Endothelial cell of umbilical vein (primary cell): ENCODE measurements at regions of chr18 and their contacts with region 1.

Region 1: DNA sequence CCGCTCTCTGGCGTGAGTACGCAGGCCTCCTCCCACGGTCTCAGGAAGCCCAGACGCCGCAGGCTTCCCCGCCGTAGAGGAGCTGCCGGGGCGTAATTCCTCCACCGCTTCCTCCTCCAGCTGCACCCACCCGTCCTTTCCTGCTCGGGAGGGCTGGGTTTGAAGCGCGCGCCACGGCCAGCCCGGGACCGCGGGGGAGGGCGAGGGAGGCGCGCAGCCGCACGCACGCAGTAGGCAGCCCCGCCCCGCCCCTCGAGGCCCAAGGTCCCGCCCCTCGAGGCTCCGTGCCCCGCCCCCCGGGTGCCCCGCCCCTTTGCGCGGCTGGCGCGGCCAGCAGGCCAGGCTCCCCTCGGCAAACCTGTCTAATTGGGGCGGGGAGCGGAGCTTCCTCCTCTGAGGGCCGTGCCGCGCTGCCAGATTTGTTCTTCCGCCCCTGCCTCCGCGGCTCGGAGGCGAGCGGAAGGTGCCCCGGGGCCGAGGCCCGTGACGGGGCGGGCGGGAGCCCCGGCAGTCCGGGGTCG is at the start of gene MALT1:
- DNase-seq: peak; percentile 85
- H3K4me3 ChIP-seq: peak within 1 kb of the TSS; percentile 60 to 72 (median 64)
- H3K27ac ChIP-seq: peak within 1 kb of the TSS; percentile 36
- H3K4me1 ChIP-seq: peaks cover 25% of the 10 kb centered on the region
- H3K27me3 ChIP-seq: peaks cover 5% of the 10 kb centered on the region in 2 experiments
- CTCF ChIP-seq: no peak
- POLR2A ChIP-seq: peak; percentile 50
- total RNA-seq, gene MALT1: 5.1 and 8.8 TPM in 2 replicates

Region 2: DNA sequence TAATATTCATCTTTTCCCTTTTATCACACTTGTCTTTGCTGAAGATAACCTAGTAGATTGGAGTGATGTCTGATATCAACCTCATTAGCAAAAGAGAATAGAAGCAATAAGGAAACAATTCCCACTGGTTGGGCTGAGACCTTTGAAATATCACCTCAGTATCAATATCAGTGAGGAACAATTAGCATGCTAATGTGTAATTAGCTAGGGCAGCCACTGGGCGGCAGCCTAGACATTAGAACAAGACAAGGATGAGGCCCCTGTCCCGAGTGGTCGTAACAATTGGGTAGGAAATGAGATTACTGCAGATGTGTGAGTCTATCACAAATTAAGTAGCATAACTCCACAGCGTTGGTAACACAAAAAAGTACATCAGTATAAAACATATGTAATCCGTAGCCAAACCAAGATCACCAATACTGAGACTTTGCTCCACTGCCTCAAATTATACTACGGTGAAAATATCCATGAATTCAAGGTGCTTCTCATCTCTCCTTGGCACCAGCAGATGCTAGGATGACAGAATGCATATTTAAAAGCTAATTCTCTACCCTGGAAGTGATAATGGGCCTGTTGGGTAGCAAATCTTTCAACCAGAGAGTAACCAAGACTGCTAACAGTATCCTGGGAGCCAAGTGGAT is 141.3 kb before region 1 on chr18:
- CTCF ChIA-PET with region 1: interaction called, 16 read pairs
- POLR2A ChIA-PET with region 1: no interaction called
- dilution Hi-C with region 1: no loop called
- intact Hi-C with region 1: loop called (anchors 5 kb)
- DNase-seq: peak; percentile 49
- H3K4me3 ChIP-seq: no peak overlapping the region
- H3K27ac ChIP-seq: no peak overlapping the region
- H3K4me1 ChIP-seq: no peaks in the 10 kb centered on the region
- H3K27me3 ChIP-seq: peaks cover 6 to 21% of the 10 kb centered on the region in 2 experiments
- CTCF ChIP-seq: peak; percentile 65 to 74
- POLR2A ChIP-seq: no peak

Region 3: DNA sequence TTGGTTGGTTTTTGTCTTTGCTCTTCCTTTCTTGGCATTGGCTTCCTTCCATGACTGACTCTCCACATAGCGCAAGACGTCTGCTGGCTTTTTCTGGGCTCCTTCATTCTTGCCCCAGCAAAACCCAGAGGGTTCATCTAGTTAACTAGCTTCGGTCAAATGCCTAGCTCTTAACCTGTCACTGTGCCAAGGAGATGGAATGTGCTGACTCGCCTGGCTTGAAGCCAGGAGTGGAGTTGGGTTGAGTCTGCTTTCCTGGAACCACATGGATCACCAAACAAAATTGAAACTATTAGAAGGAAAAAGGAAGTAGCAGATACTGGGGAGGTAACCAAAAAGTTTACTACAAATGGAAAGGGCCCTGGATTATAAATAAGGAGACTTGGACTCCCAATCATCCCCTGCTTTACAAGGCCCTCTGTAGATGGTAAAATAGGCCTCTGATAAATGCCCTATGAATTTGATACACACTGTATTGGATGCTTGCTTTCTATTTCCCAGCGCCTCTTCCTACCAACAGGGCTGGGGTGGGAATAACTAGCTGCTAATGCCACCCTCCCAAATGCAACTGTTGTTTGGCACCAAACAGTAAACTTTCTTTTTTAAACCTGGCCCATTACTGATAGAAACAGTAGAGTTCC is 11.4 kb after region 1 on chr18:
- CTCF ChIA-PET with region 1: interaction called, 16 read pairs
- POLR2A ChIA-PET with region 1: no interaction called
- dilution Hi-C with region 1: no loop called
- intact Hi-C with region 1: loop called (anchors 1 kb)
- DNase-seq: peak; percentile 73
- H3K4me3 ChIP-seq: no peak overlapping the region
- H3K27ac ChIP-seq: no peak overlapping the region
- H3K4me1 ChIP-seq: peaks cover 7% of the 10 kb centered on the region
- H3K27me3 ChIP-seq: no peaks in the 10 kb centered on the region
- CTCF ChIP-seq: no peak
- POLR2A ChIP-seq: no peak